K562 (cell line): ENCODE measurements at regions of chr3 and their contacts with region 1.

Region 1: GRCh38 chr3:44992555-44993470 is 16.8 kb downstream of the EXOSC7 start:
- DNase-seq: peak; percentile 62 to 67 (median 64)
- ATAC-seq: peak; percentile 91
- H3K4me3 ChIP-seq: no peak overlapping the region
- H3K27ac ChIP-seq: no peak overlapping the region
- H3K4me1 ChIP-seq: no peaks in the 10 kb centered on the region; a peak in 1 of 5 replicates
- H3K27me3 ChIP-seq: no peaks in the 10 kb centered on the region
- CTCF ChIP-seq: peak; percentile 85 to 98 (median 90)
- EP300 ChIP-seq: no peak
- POLR2A ChIP-seq: no peak
- RAD21 ChIP-seq: peak; percentile 44 to 50

Region 2: DNA sequence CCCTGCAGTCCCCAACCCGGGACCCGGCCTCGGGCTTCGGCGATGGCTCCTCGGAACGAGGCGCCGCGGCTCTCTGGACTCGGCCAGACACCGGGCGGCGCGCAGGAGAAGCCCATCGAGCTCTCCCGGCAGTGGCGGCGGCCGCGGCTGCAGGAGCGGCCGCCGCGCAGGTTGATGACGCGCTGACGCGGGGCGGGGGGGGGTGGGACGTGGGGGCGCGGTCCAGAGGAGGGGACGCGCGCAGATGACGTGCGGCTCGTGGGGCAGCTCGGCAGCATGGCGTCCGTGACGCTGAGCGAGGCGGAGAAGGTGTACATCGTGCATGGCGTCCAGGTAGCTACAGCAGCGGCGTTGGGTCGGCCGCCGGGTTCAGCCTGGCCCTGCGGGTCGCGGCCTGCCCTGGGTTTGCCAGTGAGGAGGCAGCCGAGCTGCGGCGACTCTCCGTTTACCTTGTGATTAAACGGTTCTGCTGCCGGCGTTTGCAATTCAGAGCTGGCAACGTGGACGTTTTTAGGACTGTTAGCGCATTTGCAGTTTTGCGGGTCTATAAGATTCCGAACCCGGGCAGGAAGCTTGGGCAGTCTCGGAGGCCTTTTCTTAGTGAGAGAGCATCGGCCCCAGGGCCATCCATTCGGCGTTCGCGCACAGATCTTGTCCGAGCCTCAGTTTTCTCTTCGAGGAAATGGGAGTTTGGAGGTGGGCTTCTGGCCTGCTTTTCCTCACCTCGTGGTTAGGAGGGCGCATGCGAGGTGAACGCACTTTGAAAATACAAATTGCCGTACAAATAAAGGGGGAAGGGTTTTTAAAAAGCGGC is 16.6 kb before region 1 on chr3 and contains the starts of genes EXOSC7 and ZDHHC3:
- CTCF ChIA-PET with region 1: interaction called, 3 read pairs
- POLR2A ChIA-PET with region 1: interaction called, 15 read pairs
- in situ Hi-C with region 1: no loop called
- intact Hi-C with region 1: no loop called
- DNase-seq: peak; percentile 94 to 98 (median 96)
- ATAC-seq: peak; percentile 80
- H3K4me3 ChIP-seq: peak within 1 kb of the TSS; percentile 94
- H3K27ac ChIP-seq: peak within 1 kb of the TSS; percentile 91
- H3K4me1 ChIP-seq: peaks cover 14 to 41% of the 10 kb centered on the region in 2 experiments
- H3K27me3 ChIP-seq: no peaks in the 10 kb centered on the region
- CTCF ChIP-seq: no peak
- EP300 ChIP-seq: no peak
- POLR2A ChIP-seq: peak; percentile 92
- RAD21 ChIP-seq: no peak
- polyA plus RNA-seq, gene EXOSC7: 236 to 237 TPM
- polyA plus RNA-seq, gene ZDHHC3: 10.3 to 11.5 TPM